Activated CD8-positive, alpha-beta T cell treated with anti-CD3 and anti-CD28 coated beads for 36 hours (primary cell): ENCODE measurements at regions of chr9 and their contacts with region 1.

Region 1: DNA sequence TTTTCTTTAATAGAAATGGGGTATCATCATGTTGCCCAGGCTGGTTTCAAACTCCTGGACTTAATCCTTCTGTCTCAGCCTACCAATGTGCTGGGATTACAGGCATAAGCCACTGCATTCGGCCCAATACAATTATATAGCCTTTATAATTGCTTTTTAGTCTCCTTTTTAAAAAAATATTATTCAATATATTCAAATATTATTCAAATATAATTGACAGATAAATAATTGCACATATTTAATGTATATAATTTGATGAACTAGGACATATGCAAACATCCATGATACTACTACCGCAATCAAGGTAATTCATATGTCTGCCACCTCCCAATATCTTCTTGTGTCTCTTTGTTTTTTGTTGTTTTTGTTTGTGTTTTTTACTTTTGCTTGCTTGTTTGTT is 894.2 kb upstream of the PTPRD start:
- DNase-seq: no peak
- ATAC-seq: no peak
- H3K4me3 Mint-ChIP-seq: no peak overlapping the region
- H3K27ac Mint-ChIP-seq: no peak overlapping the region
- H3K4me1 Mint-ChIP-seq: no peaks in the 10 kb centered on the region
- H3K27me3 Mint-ChIP-seq: no peaks in the 10 kb centered on the region
- CTCF ChIP-seq: no peak

Region 2: DNA sequence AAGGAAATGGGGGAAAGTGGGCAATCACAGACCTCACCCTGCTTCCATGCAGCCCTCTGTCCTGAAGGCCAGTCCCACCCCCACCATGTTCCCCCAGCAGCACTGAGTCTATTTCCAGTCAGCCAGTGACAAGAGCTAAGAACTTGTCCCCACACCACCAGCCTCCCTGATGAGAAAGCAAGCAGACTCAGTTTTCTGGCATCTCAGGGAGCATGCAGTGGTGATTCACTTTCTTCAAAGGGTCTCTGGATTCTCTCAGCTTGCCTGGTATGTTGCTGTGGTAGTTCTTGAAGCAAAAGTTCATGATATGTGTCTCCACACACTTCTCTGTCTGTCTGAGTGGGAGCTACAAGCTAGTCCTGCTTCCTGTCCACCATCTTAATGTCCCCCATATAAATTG is 386.4 kb after region 1 on chr9:
- CTCF ChIA-PET with region 1: no interaction called
- POLR2A ChIA-PET with region 1: no interaction called
- intact Hi-C with region 1: loop called (anchors 5 kb)
- DNase-seq: no peak
- ATAC-seq: no peak
- H3K4me3 Mint-ChIP-seq: no peak overlapping the region
- H3K27ac Mint-ChIP-seq: no peak overlapping the region
- H3K4me1 Mint-ChIP-seq: no peaks in the 10 kb centered on the region
- H3K27me3 Mint-ChIP-seq: no peaks in the 10 kb centered on the region
- CTCF ChIP-seq: no peak